ENCODE measurements at regions of chr3 and their contacts with region 1.

Region 1: GRCh38 chr3:172476347-172476746 is 28.1 kb upstream of the GHSR start:
- DNase-seq: peak in 1 of 2 donors; percentile 2
- H3K4me3 ChIP-seq: peak overlapping the region in 3 of 4 donors; percentile 35 to 48 (median 47)
- H3K27ac ChIP-seq: no peak overlapping the region
- H3K4me1 ChIP-seq: peaks cover 0 to 8% (median 2%) of the 10 kb centered on the region in 4 donors
- H3K27me3 ChIP-seq: no peaks in the 10 kb centered on the region
- CTCF ChIP-seq: no peak
- EP300 ChIP-seq: no peak
- POLR2A ChIP-seq: no peak

Region 2: GRCh38 chr3:172607305-172608121 is 131.2 kb after region 1 on chr3:
- intact Hi-C with region 1: loop called (anchors 10 kb)
- DNase-seq: peak in 1 of 2 donors; percentile 75
- H3K4me3 ChIP-seq: no peak overlapping the region
- H3K27ac ChIP-seq: peak overlapping the region in 4 of 5 donors; percentile 16 to 67 (median 39)
- H3K4me1 ChIP-seq: peaks cover 0 to 14% (median 3%) of the 10 kb centered on the region in 4 donors
- H3K27me3 ChIP-seq: no peaks in the 10 kb centered on the region
- CTCF ChIP-seq: no peak
- EP300 ChIP-seq: no peak
- POLR2A ChIP-seq: no peak